ENCODE measurements at regions of chr7 and their contacts with region 1.

Region 1: DNA sequence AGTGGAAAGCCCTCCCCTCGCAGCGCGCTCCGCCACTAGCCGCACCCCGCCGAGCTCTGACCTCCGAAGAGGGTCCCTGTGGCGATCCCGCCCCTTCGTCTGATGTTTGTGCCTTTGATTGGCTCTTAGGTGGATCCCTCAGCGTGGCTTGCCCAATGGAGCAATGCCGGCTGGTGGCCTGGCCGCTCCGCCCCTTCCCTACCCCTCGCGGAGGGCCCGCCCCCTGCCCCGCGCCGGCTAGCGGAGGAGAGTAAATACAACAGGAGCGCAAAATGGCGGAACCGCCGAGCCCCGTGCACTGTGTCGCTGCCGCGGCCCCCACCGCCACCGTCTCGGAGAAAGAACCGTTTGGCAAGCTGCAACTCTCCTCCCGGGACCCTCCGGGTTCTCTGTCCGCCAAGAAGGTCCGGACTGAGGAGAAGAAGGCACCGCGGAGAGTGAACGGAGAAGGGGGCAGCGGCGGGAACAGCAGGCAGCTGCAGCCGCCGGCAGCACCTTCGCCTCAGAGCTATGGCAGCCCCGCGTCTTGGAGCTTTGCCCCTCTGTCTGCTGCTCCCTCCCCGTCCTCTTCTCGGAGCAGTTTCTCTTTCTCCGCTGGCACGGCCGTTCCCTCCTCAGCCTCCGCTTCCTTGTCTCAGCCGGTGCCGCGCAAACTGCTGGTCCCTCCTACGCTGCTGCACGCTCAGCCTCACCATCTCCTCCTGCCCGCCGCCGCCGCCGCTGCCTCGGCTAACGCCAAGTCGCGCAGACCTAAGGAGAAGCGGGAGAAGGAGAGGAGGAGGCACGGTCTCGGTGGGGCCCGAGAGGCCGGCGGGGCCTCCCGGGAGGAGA is at the start of gene RSBN1L:
- DNase-seq: peak; percentile 94 to 98 (median 96)
- H3K4me3 ChIP-seq: peak within 1 kb of the TSS; percentile 68 to 98 (median 96)
- H3K4me3 Mint-ChIP-seq: peak within 1 kb of the TSS; percentile 96 to 99
- H3K27ac ChIP-seq: peak within 1 kb of the TSS; percentile 90 to 95
- H3K27ac Mint-ChIP-seq: peak within 1 kb of the TSS; percentile 91 to 97 (median 95)
- H3K4me1 ChIP-seq: peaks cover 14 to 26% of the 10 kb centered on the region in 2 donors
- H3K4me1 Mint-ChIP-seq: peaks cover 44% of the 10 kb centered on the region
- H3K27me3 ChIP-seq: no peaks in the 10 kb centered on the region
- H3K27me3 Mint-ChIP-seq: no peaks in the 10 kb centered on the region
- CTCF ChIP-seq: peak; percentile 41
- polyA plus RNA-seq, gene RSBN1L: 1.3 to 10.0 (median 2.2) TPM

Region 2: GRCh38 chr7:77731716-77732115 is 35.3 kb after region 1 on chr7:
- intact Hi-C with region 1: loop called in 1 of 2 experiments (anchors 2 kb)
- DNase-seq: no peak
- H3K4me3 ChIP-seq: no peak overlapping the region
- H3K4me3 Mint-ChIP-seq: no peak overlapping the region
- H3K27ac ChIP-seq: no peak overlapping the region
- H3K27ac Mint-ChIP-seq: peak overlapping the region in 2 of 7 donors; percentile 65 to 66
- H3K4me1 ChIP-seq: peaks cover 11 to 16% of the 10 kb centered on the region in 2 donors
- H3K4me1 Mint-ChIP-seq: peaks cover 26% of the 10 kb centered on the region
- H3K27me3 ChIP-seq: no peaks in the 10 kb centered on the region
- H3K27me3 Mint-ChIP-seq: no peaks in the 10 kb centered on the region
- CTCF ChIP-seq: no peak

Region 3: GRCh38 chr7:77798394-77799077 is 102.1 kb after region 1 on chr7 and contains the starts of genes PHTF2 and TMEM60:
- intact Hi-C with region 1: loop called in 1 of 2 experiments (anchors 5 kb)
- DNase-seq: peak; percentile 97 to 99 (median 97)
- H3K4me3 ChIP-seq: peak within 1 kb of the TSS; percentile 84 to 97 (median 91)
- H3K4me3 Mint-ChIP-seq: peak within 1 kb of the TSS; percentile 97 to 98
- H3K27ac ChIP-seq: peak within 1 kb of the TSS; percentile 88 to 92
- H3K27ac Mint-ChIP-seq: peak within 1 kb of the TSS; percentile 89 to 98 (median 95)
- H3K4me1 ChIP-seq: peaks cover 36 to 59% of the 10 kb centered on the region in 2 donors
- H3K4me1 Mint-ChIP-seq: peaks cover 66% of the 10 kb centered on the region
- H3K27me3 ChIP-seq: no peaks in the 10 kb centered on the region
- H3K27me3 Mint-ChIP-seq: no peaks in the 10 kb centered on the region
- CTCF ChIP-seq: peak; percentile 32
- polyA plus RNA-seq, gene PHTF2: 10.1 to 34.3 (median 10.3) TPM
- polyA plus RNA-seq, gene TMEM60: 5.5 to 27.6 (median 25.6) TPM

Measured in CD14-positive monocyte (primary cell).